MCF 10A (cell line): ENCODE measurements at regions of chr21 and their contacts with region 1.

Region 1: DNA sequence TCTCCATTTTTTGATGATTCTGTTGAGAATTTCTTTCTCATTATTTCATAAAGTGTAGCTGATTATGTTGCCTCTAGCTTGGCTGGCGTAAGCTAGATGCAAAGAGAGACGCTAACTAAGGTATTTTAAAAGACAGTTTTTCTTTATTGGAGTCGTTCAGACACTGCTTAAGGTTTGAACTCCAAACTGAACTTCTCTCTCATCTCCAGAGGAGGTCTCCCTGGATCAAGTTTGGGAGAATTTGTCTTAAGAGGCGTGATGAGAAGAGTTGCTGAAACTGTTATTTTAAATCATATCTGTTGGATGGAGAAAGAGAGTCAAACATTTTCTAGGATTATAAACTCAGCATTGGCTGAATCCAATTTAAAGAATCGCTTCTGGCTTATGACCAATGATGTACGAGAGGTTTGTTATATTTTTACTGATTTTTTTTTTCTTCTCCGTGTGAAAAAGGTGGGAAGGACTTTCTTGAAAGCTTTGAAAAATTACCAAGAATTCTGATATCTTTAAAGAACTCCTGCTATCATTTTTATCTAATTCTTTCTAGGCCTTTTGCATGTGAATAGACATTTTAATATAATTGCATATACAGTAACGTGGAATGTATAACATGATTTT is 34.0 kb downstream of the MAP3K7CL start:
- DNase-seq: peak; percentile 89
- H3K4me3 Mint-ChIP-seq: no peak overlapping the region
- H3K27ac Mint-ChIP-seq: peak overlapping the region; percentile 93
- H3K4me1 Mint-ChIP-seq: peaks cover 49% of the 10 kb centered on the region
- H3K27me3 Mint-ChIP-seq: no peaks in the 10 kb centered on the region
- CTCF ChIP-seq: peak; percentile 84

Region 2: GRCh38 chr21:28215214-28215954 is 949.0 kb before region 1 on chr21:
- CTCF ChIA-PET with region 1: no interaction called
- POLR2A ChIA-PET with region 1: no interaction called
- intact Hi-C with region 1: no loop called
- DNase-seq: peak; percentile 87
- H3K4me3 Mint-ChIP-seq: no peak overlapping the region
- H3K27ac Mint-ChIP-seq: peak overlapping the region; percentile 77
- H3K4me1 Mint-ChIP-seq: peaks cover 8% of the 10 kb centered on the region
- H3K27me3 Mint-ChIP-seq: no peaks in the 10 kb centered on the region
- CTCF ChIP-seq: no peak

Region 3: DNA sequence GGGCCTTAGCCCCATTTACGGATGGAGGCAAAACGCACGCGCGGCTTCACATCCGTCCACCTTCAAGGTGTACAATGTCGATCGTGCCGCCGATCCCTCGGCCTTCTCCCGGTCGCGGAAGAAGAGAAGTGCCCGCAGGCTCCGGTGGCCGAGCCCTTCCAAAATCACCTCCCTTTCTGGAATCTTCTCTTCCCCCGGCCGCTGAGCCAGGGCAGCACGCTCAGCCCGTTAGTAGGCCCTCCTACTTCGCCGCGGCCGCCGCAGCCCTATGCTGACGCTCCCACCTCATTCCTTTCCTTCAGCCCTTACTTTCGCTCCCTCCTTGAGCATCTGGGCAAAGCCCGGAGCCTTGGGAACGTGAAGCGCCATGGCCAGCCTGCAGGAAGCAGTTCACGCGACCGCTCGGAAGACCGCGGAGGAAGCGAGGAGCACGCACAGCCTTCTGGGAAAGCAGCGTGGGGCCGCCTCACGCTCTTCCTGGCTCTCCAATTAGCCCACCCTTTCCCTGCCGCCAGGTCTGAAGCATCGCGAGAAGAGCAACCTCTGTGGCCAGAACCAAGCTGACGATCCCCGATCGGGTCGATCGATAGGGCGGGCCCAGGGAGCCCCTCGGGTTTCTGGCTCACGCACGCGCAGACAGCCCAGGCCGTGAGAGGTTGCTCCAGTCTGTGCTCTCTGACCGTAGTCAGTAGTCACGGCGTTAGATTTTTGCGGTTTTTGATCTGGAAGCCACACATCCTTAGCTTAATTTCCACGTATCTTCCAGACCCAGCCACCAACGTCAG is 91.0 kb before region 1 on chr21 and contains the start of gene CCT8:
- CTCF ChIA-PET with region 1: interaction called, 7 read pairs
- POLR2A ChIA-PET with region 1: interaction called, 11 read pairs
- intact Hi-C with region 1: no loop called
- DNase-seq: peak; percentile 99
- H3K4me3 Mint-ChIP-seq: peak within 1 kb of the TSS; percentile 100
- H3K27ac Mint-ChIP-seq: peak within 1 kb of the TSS; percentile 100
- H3K4me1 Mint-ChIP-seq: peaks cover 22% of the 10 kb centered on the region
- H3K27me3 Mint-ChIP-seq: no peaks in the 10 kb centered on the region
- CTCF ChIP-seq: no peak
- total RNA-seq, gene CCT8: 174 and 221 TPM in 2 replicates

Region 4: GRCh38 chr21:29175408-29176134 is 11.1 kb after region 1 on chr21:
- CTCF ChIA-PET with region 1: interaction called, 35 read pairs
- POLR2A ChIA-PET with region 1: interaction called, 5 read pairs
- intact Hi-C with region 1: no loop called
- DNase-seq: peak; percentile 65
- H3K4me3 Mint-ChIP-seq: no peak overlapping the region
- H3K27ac Mint-ChIP-seq: peak overlapping the region; percentile 84
- H3K4me1 Mint-ChIP-seq: peaks cover 13% of the 10 kb centered on the region
- H3K27me3 Mint-ChIP-seq: no peaks in the 10 kb centered on the region
- CTCF ChIP-seq: no peak

Region 5: DNA sequence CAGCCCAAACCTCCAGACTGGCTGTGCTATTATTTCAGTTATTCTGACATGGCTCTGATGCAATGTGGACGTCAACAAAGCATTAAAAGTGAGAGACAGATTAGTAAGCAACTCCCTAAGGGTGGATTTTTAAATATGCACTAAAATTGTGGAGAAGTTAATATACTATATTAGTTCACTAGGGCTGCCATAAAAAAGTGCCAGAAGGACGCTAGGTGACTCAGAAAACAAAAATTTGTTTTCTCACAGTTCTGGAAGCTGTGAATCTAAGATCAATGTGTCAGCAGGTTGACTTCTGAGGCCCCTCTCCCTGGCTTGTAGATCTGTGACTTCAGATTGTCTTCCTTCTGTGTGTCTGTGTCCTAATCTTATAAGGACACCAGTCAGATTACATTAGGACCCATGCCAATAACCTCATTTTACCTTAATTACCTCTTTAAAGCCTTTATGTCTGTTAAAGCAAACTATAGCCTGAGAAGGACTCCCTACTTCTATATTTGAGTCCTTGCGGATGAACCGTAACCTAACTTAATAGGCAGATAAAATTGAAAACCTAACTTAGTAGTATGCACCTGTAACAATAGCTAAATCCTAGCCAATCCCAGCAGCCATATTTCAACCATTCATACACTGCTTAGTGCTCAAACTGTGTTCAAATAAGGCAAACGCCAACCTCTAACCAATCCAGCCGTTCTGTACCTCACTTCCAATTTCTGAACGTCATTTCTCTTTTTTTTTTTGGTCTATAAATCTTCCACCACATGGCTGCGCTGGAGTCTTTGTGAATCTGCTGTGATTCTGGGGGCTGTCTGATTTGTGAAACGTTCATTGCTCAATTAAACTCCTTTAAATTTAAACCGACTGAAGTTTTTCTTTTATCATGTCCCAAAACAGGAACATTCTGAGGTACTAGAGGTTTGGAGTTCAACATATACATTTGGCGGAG is 68.4 kb after region 1 on chr21:
- CTCF ChIA-PET with region 1: interaction called, 7 read pairs
- POLR2A ChIA-PET with region 1: interaction called, 5 read pairs
- intact Hi-C with region 1: loop called (anchors 2 kb)
- DNase-seq: peak; percentile 56
- H3K4me3 Mint-ChIP-seq: no peak overlapping the region
- H3K27ac Mint-ChIP-seq: peak overlapping the region; percentile 89
- H3K4me1 Mint-ChIP-seq: peaks cover 40% of the 10 kb centered on the region
- H3K27me3 Mint-ChIP-seq: no peaks in the 10 kb centered on the region
- CTCF ChIP-seq: no peak

Region 6: GRCh38 chr21:29287383-29287782 is 122.9 kb after region 1 on chr21:
- CTCF ChIA-PET with region 1: interaction called, 63 read pairs
- POLR2A ChIA-PET with region 1: interaction called, 6 read pairs
- intact Hi-C with region 1: loop called (anchors 1 kb)
- DNase-seq: no peak
- H3K4me3 Mint-ChIP-seq: no peak overlapping the region
- H3K27ac Mint-ChIP-seq: no peak overlapping the region
- H3K4me1 Mint-ChIP-seq: peaks cover 17% of the 10 kb centered on the region
- H3K27me3 Mint-ChIP-seq: no peaks in the 10 kb centered on the region
- CTCF ChIP-seq: no peak

Region 7: DNA sequence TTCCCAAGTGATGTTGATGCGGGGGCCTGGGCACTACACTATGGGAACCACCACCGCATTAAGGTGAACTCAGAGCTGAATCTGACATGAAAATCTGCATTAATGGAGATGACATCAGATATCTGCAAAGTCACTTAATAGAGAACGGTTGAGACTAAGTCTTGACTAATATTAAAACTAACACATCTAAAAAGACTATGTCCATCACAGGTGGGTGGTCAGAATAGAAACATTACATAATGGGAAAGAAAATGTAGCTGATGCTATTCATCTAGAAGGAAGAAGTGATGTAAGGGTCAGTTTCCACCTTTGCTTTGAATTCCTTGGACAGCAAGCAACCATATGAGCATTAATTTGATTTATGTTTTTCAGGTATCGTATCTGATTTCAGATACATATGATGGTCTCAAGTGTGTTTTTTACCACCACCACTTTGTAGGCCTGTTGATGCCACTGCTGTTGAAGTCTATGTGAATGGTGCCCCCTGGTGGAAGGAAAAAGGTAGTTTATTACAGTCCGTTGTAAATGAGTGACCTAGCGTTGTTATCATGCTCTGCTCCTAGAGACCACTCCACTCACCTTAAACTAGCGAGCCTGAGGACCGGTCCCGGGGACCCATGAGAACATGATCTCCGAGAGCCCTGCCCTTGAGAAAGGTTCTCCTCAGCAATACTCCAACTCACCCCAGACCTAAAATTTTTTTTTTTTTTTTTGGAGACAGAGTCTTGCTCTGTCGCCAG is 207.8 kb after region 1 on chr21:
- CTCF ChIA-PET with region 1: interaction called, 53 read pairs
- POLR2A ChIA-PET with region 1: interaction called, 7 read pairs
- intact Hi-C with region 1: loop called (anchors 1 kb)
- DNase-seq: peak; percentile 86
- H3K4me3 Mint-ChIP-seq: no peak overlapping the region
- H3K27ac Mint-ChIP-seq: no peak overlapping the region
- H3K4me1 Mint-ChIP-seq: peaks cover 3% of the 10 kb centered on the region
- H3K27me3 Mint-ChIP-seq: no peaks in the 10 kb centered on the region
- CTCF ChIP-seq: peak; percentile 69